Head of caudate nucleus (tissue), 42 donors: ENCODE measurements at regions of chr11 and their contacts with region 1.

Region 1: GRCh38 chr11:108664730-108665525 is at the start of gene DDX10:
- DNase-seq: peak; percentile 96 to 99 (median 98)

Region 2: DNA sequence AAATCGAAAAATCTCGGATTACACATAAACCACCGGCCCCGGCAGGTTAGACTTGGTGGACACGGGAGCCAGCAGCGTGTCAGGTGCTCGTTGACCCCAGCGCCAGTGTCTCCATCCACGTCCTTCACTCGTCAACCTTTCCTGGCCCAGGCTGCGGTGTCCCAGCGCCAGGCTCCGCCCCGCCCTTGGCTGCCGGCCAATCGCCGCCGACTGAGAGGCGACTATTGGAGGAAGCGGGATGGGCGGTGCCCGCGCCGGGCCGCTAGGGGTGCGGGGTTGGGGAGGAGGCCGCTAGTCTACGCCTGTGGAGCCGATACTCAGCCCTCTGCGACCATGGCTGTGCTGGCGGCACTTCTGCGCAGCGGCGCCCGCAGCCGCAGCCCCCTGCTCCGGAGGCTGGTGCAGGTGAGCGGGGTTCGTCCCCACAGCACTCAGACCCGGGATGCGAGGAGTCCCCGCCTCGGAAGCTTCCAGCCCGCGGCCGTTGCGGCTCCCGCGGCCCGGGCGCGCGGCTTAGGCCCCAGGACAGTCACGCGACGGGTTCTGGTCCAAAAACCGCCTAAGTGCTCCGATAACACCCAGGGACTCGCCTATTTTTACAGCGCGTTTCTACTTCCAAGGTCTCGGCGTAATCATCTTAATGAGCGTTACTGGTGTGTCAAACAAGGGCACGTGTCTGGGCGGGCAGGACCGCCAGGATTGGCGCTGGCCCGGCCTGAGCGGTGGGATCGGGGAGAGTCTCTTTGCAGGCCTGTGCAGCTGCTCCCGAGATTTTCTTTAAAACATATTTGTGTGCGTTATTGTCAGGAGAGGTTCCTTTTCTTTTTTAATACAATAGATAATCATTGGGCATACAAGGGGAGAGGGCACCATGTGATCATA is 543.4 kb before region 1 on chr11 and contains the start of gene ACAT1:
- intact Hi-C with region 1: loop called (anchors 5 kb)
- DNase-seq: peak; percentile 90 to 99 (median 97)

Region 3: DNA sequence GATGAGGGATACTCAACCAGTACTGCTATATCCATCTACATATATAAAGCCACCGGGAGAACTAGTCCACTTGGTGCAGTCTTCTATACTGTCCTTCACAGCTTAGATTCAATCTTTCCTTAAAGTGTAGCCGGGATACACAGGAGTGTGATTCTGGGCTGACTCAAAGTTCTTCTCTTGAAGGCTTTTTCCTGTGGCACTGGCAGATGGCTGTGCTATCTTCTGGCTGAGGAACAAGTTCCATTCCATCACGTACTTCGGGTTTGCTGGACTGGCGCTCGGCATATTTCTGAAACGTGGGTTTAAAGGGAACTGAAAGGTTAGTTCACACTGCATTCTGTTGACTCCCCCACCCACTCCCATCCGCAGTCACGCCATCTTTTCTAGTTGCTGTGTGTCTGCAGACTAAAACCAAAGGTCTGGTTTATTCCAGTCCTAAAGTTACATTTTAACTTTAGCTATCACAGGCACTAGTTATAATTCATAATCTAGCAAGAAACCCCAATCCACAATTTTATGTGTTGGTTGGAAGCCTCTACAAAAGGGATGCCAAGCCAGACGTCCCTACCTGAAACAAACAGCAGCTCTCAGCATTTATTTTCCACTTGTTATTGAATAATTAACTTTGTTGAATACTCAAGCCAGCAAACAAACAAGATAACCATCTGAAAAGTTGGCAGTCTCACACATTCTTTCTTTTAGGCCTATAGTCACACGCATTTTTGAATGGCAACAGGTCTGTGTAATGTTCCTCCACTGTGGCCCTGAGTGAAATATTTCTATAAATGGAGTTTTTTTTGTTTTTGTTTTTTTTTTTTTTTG is 190.1 kb before region 1 on chr11:
- intact Hi-C with region 1: no loop called
- DNase-seq: no peak

Region 4: GRCh38 chr11:108895579-108896480 is 230.9 kb after region 1 on chr11:
- intact Hi-C with region 1: no loop called
- DNase-seq: no peak

Region 5: GRCh38 chr11:108912581-108912980 is 247.7 kb after region 1 on chr11:
- intact Hi-C with region 1: no loop called
- DNase-seq: no peak